Activated naive CD4-positive, alpha-beta T cell treated with anti-CD3 and anti-CD28 coated beads for 36 hours (primary cell): ENCODE measurements at regions of chr14 and their contacts with region 1.

Region 1: GRCh38 chr14:49767562-49768300 is at the start of gene KLHDC2:
- DNase-seq: peak; percentile 91
- H3K4me3 Mint-ChIP-seq: peak within 1 kb of the TSS; percentile 94
- H3K27ac Mint-ChIP-seq: peak within 1 kb of the TSS; percentile 99
- H3K4me1 Mint-ChIP-seq: peaks cover 34% of the 10 kb centered on the region
- H3K27me3 Mint-ChIP-seq: no peaks in the 10 kb centered on the region
- total RNA-seq, gene KLHDC2: 24.3 to 25.0 TPM

Region 2: DNA sequence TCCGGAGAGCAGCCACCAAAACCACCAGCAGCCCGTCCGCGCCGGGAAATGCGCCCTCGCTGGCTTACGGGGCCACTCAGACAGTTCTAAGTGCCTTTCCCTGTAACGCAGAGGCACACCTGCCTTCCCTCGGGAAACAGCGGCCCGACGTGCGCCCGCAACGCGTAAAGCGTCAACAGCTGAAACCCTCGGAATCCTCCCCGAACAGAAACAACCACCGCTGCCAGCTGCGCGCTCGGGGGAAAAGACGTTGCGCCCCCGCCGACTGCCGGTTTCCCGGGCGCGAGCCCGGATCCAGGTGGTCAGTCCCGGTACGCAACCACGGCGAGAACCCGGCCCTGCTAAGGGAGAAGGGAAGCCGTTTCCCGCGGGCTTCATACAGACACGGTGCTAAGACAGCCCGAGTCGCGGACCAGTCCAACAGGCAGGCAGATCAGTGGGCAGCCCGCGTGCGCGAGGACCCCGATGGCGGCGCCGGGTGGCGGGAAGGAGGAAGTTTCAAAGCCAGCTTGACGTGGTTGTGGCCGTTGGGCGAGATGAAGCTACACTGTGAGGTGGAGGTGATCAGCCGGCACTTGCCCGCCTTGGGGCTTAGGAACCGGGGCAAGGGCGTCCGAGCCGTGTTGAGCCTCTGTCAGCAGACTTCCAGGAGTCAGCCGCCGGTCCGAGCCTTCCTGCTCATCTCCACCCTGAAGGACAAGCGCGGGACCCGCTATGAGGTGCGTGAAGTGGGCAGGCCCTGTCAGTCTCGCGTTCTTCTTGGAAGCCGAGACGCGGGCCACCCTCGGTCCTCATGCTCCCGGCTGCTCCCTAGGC is 169.0 kb before region 1 on chr14 and contains the start of gene LRR1:
- CTCF ChIA-PET with region 1: no interaction called
- intact Hi-C with region 1: loop called (anchors 1 kb)
- DNase-seq: peak; percentile 87
- H3K4me3 Mint-ChIP-seq: peak within 1 kb of the TSS; percentile 99
- H3K27ac Mint-ChIP-seq: peak within 1 kb of the TSS; percentile 99
- H3K4me1 Mint-ChIP-seq: peaks cover 20% of the 10 kb centered on the region
- H3K27me3 Mint-ChIP-seq: no peaks in the 10 kb centered on the region
- total RNA-seq, gene LRR1: 47.7 to 49.1 TPM

Region 3: DNA sequence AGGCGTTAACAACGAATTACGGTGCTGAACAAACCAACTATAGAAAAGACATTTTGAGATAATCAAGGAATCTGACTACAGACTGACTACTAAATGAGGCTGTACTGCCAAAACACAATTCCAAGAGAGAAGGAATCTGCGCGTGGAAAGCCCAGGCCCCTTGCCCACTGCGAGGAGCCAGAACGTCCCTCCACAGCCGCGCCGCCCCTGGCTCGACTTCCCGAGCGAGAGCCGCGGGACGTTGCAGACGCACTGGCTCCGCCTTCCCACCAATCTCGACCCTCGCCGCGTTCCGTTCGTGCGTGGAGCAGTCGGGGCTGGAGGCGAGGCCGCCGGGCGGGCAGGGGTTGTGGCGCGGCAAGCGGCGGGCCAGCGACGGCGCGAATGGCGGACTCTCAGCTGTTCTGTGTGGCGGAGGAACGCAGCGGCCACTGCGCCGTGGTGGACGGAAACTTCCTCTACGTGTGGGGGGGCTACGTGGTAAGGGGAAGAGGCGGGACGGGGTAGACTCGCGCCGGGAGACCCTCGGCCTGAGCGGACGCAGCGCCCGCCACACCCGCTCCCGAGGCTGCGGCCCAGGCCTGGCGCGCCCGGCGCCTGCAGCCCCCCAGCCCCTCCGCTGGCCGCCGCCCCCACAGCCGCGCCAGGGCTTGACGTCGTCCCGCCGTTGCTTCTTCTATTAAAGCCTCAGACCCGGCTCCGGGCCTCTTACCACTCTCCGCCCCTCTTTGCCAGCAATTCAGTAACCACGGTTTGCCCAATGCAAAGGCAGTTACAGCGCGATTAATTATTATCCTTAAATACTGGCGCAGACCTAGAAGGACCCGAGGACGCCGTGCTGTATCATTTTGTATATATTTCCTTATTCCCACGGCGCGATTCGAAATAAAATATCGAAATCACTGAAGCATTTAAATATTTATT is 74.7 kb before region 1 on chr14 and contains the start of gene KLHDC1:
- CTCF ChIA-PET with region 1: interaction called, 3 read pairs
- intact Hi-C with region 1: loop called (anchors 1 kb)
- DNase-seq: peak; percentile 84
- H3K4me3 Mint-ChIP-seq: peak within 1 kb of the TSS; percentile 81
- H3K27ac Mint-ChIP-seq: peak within 1 kb of the TSS; percentile 62
- H3K4me1 Mint-ChIP-seq: peaks cover 34% of the 10 kb centered on the region
- H3K27me3 Mint-ChIP-seq: no peaks in the 10 kb centered on the region
- total RNA-seq, gene KLHDC1: 0.57 to 0.79 TPM

Region 4: DNA sequence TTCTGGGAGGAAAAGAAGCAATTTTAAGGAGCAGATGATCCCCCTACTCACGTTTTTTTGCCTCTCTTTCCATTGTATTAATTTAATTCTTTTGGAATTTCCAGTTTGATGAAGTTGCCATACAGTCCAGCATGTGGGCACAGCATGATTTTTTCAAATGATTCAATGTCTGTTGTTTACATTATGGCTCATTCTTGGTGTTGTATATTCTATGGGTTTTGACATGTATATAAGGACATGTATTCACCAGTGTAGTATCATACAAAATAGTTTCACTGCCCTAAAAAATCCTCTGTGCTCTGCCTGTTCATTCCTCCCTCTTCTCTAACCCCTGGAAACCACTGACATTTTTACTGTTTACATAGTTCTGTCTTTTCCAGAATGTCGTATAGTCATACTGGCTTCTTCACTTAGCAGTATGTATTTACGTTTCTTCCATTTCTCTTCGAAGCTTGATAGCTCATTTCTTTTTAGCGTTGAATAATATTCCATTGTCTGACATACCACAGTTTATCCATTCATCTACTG is 13.1 kb before region 1 on chr14:
- CTCF ChIA-PET with region 1: no interaction called
- intact Hi-C with region 1: no loop called
- DNase-seq: no peak
- H3K4me3 Mint-ChIP-seq: no peak overlapping the region
- H3K27ac Mint-ChIP-seq: no peak overlapping the region
- H3K4me1 Mint-ChIP-seq: no peaks in the 10 kb centered on the region
- H3K27me3 Mint-ChIP-seq: no peaks in the 10 kb centered on the region

Region 5: DNA sequence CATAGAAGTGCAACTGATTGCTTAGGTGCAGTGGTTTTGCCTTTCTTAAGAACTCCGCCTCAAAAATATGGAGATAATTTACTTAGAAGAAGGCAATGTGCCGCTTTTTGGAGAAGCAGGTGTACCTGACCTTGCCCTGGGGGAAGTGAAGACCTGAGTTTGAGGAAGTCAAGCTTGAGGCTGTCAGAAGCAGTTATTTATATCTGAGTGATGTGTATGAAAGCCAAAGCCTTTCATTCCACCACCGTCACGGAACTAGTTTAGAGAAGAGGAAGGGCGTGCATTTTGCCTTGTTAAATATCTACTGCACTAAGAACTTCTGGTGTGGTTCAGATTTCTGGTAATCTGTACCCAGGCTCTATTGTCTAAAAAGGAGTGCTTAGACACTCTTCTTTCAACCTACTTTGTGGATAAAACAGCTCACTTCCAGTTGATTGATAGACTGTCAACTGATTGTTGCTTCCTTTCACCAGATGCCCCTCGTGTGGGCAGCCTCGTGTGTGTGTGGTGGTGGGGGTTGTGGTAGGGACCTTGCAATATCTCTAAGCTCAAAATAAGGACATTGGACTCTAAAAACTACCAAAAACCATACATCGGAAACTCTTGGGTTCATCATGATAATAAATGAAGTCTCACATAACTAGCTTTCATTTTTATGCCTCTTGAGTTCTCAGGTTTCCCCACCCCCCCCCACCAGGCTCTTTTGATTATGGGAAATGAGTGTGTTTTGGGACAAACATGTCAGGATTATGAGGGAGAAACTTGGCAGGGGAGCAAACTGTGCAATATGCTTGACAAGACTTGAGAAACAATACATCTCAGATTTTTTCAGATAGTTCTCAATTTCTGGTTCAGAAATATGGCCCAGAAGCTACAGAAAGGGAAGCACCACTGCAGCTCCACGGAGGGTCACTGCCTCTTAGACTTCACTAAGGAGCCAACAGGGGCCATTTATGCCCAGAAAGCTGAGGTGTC is 203.7 kb after region 1 on chr14:
- CTCF ChIA-PET with region 1: no interaction called
- intact Hi-C with region 1: loop called (anchors 5 kb)
- DNase-seq: peak; percentile 69
- H3K4me3 Mint-ChIP-seq: peak overlapping the region; percentile 73
- H3K27ac Mint-ChIP-seq: peak overlapping the region; percentile 97
- H3K4me1 Mint-ChIP-seq: peaks cover 59% of the 10 kb centered on the region
- H3K27me3 Mint-ChIP-seq: no peaks in the 10 kb centered on the region

Region 6: DNA sequence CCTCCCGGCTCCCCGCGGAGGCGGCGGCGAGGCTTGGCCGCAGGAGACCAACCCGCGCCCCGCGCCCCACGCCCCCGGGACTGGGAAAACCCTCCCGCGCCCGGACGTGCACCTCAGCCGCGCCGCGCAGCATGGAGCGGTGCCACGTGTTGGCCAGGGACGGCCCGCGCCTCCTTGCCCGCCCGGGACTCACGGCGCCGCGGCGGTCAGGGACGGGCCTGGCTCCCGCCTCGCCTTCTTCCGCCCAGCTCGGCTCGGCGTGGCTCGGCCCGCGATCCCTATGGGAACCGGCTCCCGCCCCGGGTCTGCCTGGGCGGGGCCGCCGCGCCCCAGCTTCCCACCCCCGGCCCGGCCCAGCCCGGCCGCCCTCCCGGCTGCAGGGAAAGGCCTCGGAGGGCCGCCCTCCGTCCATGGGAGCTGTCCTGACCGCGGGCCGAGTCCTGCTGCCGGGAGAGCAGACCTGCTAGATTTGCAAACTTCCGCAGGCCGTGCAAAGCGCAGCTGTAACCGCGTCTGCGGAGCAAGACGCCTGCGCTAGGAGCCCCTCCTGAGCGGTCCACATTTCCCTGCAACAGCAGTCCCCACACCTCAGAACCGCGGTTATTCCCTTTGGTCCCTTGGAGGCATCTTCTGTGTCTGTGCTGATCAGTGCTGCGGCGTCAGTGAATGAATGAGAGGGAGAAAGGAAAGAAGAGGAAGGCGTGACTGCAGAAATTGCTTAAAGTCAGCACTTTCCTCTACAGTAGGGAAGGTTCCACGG is 629.1 kb after region 1 on chr14 and contains the start of gene CDKL1:
- CTCF ChIA-PET with region 1: no interaction called
- intact Hi-C with region 1: loop called (anchors 5 kb)
- DNase-seq: peak; percentile 53
- H3K4me3 Mint-ChIP-seq: peak within 1 kb of the TSS; percentile 83
- H3K27ac Mint-ChIP-seq: peak within 1 kb of the TSS; percentile 59
- H3K4me1 Mint-ChIP-seq: peaks cover 13% of the 10 kb centered on the region
- H3K27me3 Mint-ChIP-seq: peaks cover 2% of the 10 kb centered on the region
- total RNA-seq, gene CDKL1: 1.5 to 2.0 TPM